Right ventricle myocardium superior (tissue), 1 donor: ENCODE measurements at regions of chr10 and their contacts with region 1.

Region 1: GRCh38 chr10:119207367-119207668 is at the start of gene GRK5:
- DNase-seq: peak; percentile 97
- ATAC-seq: peak; percentile 93
- total RNA-seq, gene GRK5: 47.6 TPM

Region 2: GRCh38 chr10:118818621-118819221 is 388.6 kb before region 1 on chr10:
- intact Hi-C with region 1: no loop called
- DNase-seq: peak; percentile 67
- ATAC-seq: peak; percentile 90

Region 3: GRCh38 chr10:119090968-119091367 is 116.3 kb before region 1 on chr10:
- intact Hi-C with region 1: no loop called
- DNase-seq: no peak
- ATAC-seq: no peak

Region 4: DNA sequence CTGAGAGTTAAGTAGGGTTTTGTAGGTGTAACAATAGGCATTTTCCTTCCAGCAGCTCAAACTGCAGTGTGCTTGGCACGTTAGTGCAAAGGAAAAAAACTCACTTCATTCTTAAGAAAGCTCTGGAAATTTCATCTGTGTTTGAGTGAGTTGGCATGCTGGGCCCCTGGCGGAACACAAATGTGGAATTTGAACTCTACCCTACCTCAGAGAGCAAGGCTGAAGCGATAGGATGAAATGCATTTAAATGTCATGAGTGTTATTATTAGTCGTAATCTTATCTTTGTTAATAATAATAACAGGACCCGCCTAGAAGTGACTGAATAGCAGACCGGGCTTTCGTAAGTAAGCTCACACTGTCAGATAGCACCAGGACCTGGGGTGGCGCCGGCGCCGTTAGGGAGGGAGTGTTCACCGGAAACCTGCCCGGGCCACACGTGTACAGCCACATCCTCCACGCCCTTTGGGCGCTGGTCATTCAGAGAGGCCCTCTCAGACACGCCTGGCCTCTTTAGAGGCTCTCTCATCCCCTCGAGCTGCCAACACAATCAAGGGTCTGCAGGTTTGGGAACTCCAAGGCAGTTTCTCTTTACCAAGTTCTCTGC is 63.5 kb after region 1 on chr10:
- intact Hi-C with region 1: loop called (anchors 10 kb)
- DNase-seq: peak; percentile 92
- ATAC-seq: peak; percentile 83

Region 5: GRCh38 chr10:119290291-119291048 is 83.2 kb after region 1 on chr10:
- intact Hi-C with region 1: no loop called
- DNase-seq: no peak
- ATAC-seq: peak; percentile 3

Region 6: DNA sequence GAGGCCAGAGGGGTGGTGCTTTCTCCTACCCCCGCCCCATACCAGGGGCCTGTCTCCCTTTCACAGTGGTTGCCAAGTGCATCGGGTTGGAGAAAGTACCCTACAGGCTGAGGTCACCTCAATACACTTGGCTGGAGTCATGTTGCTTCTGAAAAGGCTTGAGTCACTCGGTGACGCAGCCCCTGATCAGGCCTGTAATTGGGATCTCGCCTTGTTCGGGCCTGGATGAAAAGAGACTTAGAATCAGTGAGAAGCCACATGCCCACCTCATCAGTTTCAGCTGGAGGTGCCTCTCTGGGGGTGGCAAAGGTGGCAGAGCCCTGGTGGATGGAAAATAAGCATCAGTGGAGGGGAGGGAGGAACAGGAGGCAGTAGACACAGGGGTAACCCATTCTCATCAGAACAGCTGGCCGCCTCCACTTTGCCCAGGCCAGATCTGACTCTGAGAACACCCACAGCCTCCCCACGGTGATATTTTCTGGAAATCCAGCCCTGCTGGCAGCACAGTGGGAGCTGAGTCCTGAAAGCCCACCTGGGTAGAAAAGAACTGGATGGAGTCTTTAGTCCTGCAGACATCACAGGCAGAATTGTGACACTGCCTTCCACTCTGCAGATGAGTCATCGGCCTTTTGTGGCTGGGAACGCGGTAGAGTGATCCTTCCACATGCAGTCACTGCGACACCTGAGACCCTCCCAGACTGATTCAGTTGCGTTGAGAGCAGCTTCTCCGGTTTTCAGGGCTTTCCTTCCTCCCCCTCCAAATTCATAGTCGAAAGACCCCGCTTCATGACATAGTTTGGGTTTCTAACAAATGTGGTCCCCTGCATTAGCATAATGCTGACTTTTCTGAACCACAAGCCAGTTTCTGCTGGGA is 108.0 kb after region 1 on chr10:
- intact Hi-C with region 1: loop called (anchors 5 kb)
- DNase-seq: peak; percentile 65
- ATAC-seq: peak; percentile 57

Region 7: DNA sequence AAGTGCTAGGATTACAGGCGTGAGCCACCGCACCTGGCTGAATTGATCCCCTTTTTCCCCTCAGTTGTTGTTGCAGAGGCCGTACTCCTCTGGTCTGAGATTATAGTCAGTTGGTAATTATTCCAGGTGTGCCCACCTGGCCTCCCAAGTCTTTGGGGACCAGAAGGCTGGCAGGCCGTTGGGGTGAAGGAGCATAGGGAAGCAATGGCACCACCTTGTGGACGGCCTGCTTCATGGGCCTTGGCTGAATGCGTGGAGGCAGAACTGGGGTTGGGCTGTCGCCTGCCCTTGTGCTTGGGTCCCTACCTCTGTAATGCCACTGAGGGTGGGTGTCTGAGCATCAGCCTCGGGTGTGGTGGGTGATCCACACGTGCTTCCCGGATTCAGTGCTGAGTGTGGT is 209.5 kb after region 1 on chr10:
- intact Hi-C with region 1: loop called (anchors 5 kb)
- DNase-seq: peak; percentile 86
- ATAC-seq: peak; percentile 49

Region 8: DNA sequence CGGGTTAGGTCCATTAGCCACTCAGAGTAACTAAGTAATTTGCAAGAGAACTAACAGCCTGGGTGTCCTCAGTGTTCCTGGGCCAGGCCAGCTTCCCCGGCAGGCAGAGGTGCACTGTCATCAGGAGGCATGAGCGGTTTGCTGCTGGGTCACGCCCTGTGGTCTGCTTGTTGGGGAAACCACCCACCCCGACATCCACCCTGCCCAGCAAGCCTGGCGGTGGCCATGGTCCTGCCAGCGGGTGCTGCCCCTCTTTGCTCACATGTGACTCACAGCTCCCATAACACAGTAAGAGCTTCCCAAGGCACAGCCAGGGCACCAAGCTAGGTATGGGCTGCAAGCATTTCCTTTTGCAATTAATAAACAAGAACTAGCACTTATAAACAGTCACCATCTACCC is 259.3 kb after region 1 on chr10:
- intact Hi-C with region 1: no loop called
- DNase-seq: no peak
- ATAC-seq: no peak